ENCODE measurements at regions of chr9 and their contacts with region 1.

Region 1: DNA sequence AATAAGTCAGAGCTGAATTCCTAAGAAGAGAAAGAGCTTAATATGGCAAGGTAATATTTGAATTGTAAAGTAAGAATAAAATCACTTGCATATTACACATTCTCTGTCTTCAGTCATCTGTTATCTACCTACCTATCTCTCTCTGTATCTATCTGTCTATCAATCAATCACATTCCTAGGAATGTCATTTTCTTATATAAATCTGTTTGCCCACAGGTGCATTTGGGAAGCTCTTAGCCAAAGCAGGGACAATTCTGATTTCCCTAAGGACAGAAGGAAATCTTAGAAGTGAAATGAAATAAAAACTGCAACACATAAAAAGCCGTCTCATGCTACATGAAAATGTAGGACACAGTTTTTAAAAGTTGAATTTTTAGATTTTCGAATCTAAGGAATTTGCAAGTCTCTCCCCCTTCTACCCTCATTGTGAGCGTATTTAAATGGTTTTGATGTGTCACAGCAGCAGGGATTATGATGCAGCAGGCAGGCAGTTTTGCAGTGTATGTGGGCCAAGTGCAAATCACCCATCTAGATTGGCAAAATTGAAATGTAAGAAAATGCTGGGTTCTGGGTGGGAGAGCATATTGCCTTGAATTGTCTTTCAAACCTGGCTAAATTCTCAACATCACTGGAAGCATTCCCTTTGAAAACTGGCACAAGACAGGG is 155.7 kb downstream of the ACER2 start:
- DNase-seq: no peak
- H3K4me3 ChIP-seq: no peak overlapping the region
- H3K4me3 Mint-ChIP-seq: no peak overlapping the region
- H3K27ac Mint-ChIP-seq: no peak overlapping the region
- H3K4me1 ChIP-seq: no peaks in the 10 kb centered on the region
- H3K4me1 Mint-ChIP-seq: no peaks in the 10 kb centered on the region
- H3K27me3 ChIP-seq: no peaks in the 10 kb centered on the region
- H3K27me3 Mint-ChIP-seq: peaks cover 2% of the 10 kb centered on the region
- CTCF ChIP-seq: no peak

Region 2: DNA sequence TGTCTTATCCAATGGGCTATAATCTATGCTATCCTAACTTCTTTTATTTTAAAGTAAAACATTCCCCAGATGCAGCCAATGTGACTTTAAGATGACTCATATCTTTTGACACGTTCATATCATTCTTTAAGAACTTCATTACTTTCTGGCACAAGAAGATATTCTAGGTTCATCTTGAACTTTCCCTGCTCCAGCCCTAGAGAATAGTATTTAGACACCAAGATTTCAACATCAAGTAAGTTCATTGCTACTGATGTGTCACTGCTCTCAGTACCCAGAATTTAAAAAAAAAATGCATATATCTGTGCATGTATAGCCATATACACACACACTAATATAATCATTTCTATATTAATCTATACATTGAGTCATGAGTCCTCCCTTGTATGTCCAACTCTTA is 706.8 kb before region 1 on chr9:
- CTCF ChIA-PET with region 1: no interaction called
- POLR2A ChIA-PET with region 1: no interaction called
- intact Hi-C with region 1: loop called (anchors 5 kb)
- DNase-seq: no peak
- H3K4me3 ChIP-seq: no peak overlapping the region
- H3K4me3 Mint-ChIP-seq: no peak overlapping the region
- H3K27ac Mint-ChIP-seq: no peak overlapping the region
- H3K4me1 ChIP-seq: no peaks in the 10 kb centered on the region
- H3K4me1 Mint-ChIP-seq: no peaks in the 10 kb centered on the region
- H3K27me3 ChIP-seq: no peaks in the 10 kb centered on the region
- H3K27me3 Mint-ChIP-seq: peaks cover 9% of the 10 kb centered on the region
- CTCF ChIP-seq: no peak

Measured in Caco-2 (cell line).